Lower lobe of right lung (tissue), 2 donors: ENCODE measurements at regions of chrX and their contacts with region 1.

Region 1: GRCh38 chrX:155031657-155032056 is 5.0 kb downstream of the FUNDC2 start:
- DNase-seq: no peak
- ATAC-seq: no peak
- H3K4me3 ChIP-seq: no peak overlapping the region
- H3K27ac ChIP-seq: no peak overlapping the region
- H3K4me1 ChIP-seq: peaks cover 8% of the 10 kb centered on the region
- H3K27me3 ChIP-seq: no peaks in the 10 kb centered on the region
- CTCF ChIP-seq: no peak

Region 2: DNA sequence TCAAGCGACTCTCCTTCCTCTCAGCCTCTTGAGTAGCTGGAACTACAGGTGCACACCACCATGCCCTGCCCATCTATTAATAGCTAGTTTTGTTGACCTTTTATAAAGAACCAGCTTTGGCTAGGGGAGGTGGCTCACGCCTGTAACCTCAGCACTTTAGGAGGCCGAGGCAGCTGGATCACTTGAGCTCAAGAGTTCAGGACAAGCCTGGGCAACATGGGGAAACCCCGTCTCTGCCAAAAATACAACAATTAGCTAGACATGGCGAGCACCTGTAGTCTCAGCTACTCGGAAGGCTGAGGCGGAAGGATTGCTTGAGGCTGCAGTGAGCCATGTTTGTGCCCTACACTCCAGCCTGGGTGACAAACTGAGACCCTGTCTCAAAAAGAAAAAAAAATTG is 733.3 kb before region 1 on chrX:
- intact Hi-C with region 1: no loop called
- DNase-seq: no peak
- ATAC-seq: no peak
- H3K4me3 ChIP-seq: no peak overlapping the region
- H3K27ac ChIP-seq: no peak overlapping the region
- H3K4me1 ChIP-seq: no peaks in the 10 kb centered on the region
- H3K27me3 ChIP-seq: no peaks in the 10 kb centered on the region
- CTCF ChIP-seq: no peak

Region 3: GRCh38 chrX:154980330-154981096 is 51.1 kb before region 1 on chrX:
- intact Hi-C with region 1: loop called (anchors 10 kb)
- DNase-seq: peak; percentile 64
- ATAC-seq: peak; percentile 93 to 96
- H3K4me3 ChIP-seq: peak overlapping the region; percentile 42
- H3K27ac ChIP-seq: peak overlapping the region; percentile 41
- H3K4me1 ChIP-seq: no peaks in the 10 kb centered on the region
- H3K27me3 ChIP-seq: no peaks in the 10 kb centered on the region
- CTCF ChIP-seq: peak; percentile 66